MCF 10A (cell line): ENCODE measurements at regions of chr9 and their contacts with region 1.

Region 1: GRCh38 chr9:76458903-76459690 is at the start of gene GCNT1:
- DNase-seq: peak; percentile 90
- H3K4me3 Mint-ChIP-seq: peak within 1 kb of the TSS; percentile 84
- H3K27ac Mint-ChIP-seq: peak within 1 kb of the TSS; percentile 6
- H3K4me1 Mint-ChIP-seq: peaks cover 14% of the 10 kb centered on the region
- H3K27me3 Mint-ChIP-seq: no peaks in the 10 kb centered on the region
- CTCF ChIP-seq: peak; percentile 15
- total RNA-seq, gene GCNT1: 11.5 and 12.4 TPM in 2 replicates

Region 2: DNA sequence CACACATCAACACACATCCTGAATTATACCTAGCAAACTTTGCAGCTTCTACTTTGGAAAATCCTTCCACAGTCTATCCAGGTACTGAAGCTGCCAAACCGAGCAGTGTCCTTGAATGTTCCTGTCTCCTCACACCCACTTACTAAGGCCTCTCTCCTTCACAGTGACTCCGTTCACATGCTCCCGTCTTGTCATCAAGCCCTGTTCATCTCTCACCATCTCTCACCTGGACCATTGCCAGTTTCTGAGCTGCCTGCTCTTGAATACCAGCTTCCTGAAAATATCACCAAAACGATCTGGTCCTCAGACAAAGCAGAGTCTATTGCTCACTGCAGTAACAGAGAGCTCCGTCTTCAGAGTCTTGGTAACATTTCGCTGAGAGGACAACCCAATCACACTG is 57.3 kb after region 1 on chr9:
- CTCF ChIA-PET with region 1: interaction called, 3 read pairs
- POLR2A ChIA-PET with region 1: no interaction called
- intact Hi-C with region 1: loop called (anchors 10 kb)
- DNase-seq: no peak
- H3K4me3 Mint-ChIP-seq: no peak overlapping the region
- H3K27ac Mint-ChIP-seq: no peak overlapping the region
- H3K4me1 Mint-ChIP-seq: peaks cover 17% of the 10 kb centered on the region
- H3K27me3 Mint-ChIP-seq: no peaks in the 10 kb centered on the region
- CTCF ChIP-seq: no peak

Region 3: DNA sequence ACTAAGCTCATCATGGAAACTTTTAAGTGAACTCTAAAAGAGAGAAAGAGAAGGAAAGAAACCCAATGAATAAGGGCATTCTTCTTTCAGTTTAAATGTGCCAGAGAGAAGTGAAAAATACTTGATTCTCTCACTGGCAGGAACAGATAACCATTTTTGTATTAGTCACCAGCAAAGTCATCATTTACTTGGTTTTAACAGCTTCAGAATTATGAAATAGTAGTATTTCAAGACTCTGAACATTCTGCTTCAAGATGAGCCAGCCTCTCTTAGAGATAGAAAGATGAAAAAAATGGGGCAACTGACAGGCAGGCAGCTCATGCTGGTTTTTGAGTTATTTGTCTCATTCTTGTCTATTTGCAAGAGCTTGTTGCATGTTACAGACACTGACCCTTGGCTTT is 103.4 kb after region 1 on chr9:
- CTCF ChIA-PET with region 1: no interaction called
- POLR2A ChIA-PET with region 1: interaction called, 3 read pairs
- intact Hi-C with region 1: loop called (anchors 2 kb)
- DNase-seq: peak; percentile 47
- H3K4me3 Mint-ChIP-seq: peak overlapping the region; percentile 23
- H3K27ac Mint-ChIP-seq: peak overlapping the region; percentile 57
- H3K4me1 Mint-ChIP-seq: peaks cover 37% of the 10 kb centered on the region
- H3K27me3 Mint-ChIP-seq: no peaks in the 10 kb centered on the region
- CTCF ChIP-seq: no peak

Region 4: GRCh38 chr9:76651119-76651705 is 192.1 kb after region 1 on chr9:
- CTCF ChIA-PET with region 1: interaction called, 89 read pairs
- POLR2A ChIA-PET with region 1: interaction called, 3 read pairs
- intact Hi-C with region 1: loop called (anchors 1 kb)
- DNase-seq: no peak
- H3K4me3 Mint-ChIP-seq: no peak overlapping the region
- H3K27ac Mint-ChIP-seq: peak overlapping the region; percentile 95
- H3K4me1 Mint-ChIP-seq: peaks cover 42% of the 10 kb centered on the region
- H3K27me3 Mint-ChIP-seq: no peaks in the 10 kb centered on the region
- CTCF ChIP-seq: no peak